B cell (primary cell): ENCODE measurements at regions of chr12 and their contacts with region 1.

Region 1: GRCh38 chr12:25386831-25387731 is 136.4 kb upstream of the KRAS start:
- DNase-seq: peak; percentile 90
- ATAC-seq: peak; percentile 14
- H3K4me3 ChIP-seq: peak overlapping the region; percentile 68 to 97 (median 90)
- H3K4me3 Mint-ChIP-seq: peak overlapping the region; percentile 96
- H3K27ac ChIP-seq: peak overlapping the region; percentile 100
- H3K27ac Mint-ChIP-seq: peak overlapping the region; percentile 100
- H3K4me1 ChIP-seq: peaks cover 6 to 30% of the 10 kb centered on the region in 2 donors
- H3K4me1 Mint-ChIP-seq: peaks cover 41% of the 10 kb centered on the region
- H3K27me3 ChIP-seq: no peaks in the 10 kb centered on the region
- H3K27me3 Mint-ChIP-seq: no peaks in the 10 kb centered on the region
- CTCF ChIP-seq: peak; percentile 93

Region 2: DNA sequence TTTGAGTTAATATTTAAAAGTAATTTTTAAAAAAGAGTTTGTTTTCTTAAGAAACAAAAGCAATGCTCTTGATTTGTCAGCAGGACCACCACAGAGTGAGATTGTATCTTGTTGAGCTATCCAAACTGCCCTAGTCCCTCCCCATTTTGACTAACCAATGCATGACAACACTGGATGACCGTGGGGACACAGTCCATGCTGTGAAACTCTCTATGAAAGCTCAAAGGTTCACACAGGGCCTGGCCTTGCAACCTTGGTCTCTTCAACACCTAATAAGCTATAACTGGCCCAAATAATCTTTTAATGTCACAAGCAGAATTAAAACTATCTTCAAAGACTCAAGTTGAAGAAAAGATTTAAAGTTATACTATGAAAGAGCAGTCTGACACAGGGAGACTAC is 178.5 kb before region 1 on chr12:
- CTCF ChIA-PET with region 1: no interaction called
- POLR2A ChIA-PET with region 1: interaction called, 3 read pairs
- intact Hi-C with region 1: loop called (anchors 1 kb)
- DNase-seq: no peak
- ATAC-seq: no peak
- H3K4me3 ChIP-seq: no peak overlapping the region
- H3K4me3 Mint-ChIP-seq: no peak overlapping the region
- H3K27ac ChIP-seq: no peak overlapping the region
- H3K27ac Mint-ChIP-seq: no peak overlapping the region
- H3K4me1 ChIP-seq: no peaks in the 10 kb centered on the region
- H3K4me1 Mint-ChIP-seq: no peaks in the 10 kb centered on the region
- H3K27me3 ChIP-seq: no peaks in the 10 kb centered on the region
- H3K27me3 Mint-ChIP-seq: no peaks in the 10 kb centered on the region
- CTCF ChIP-seq: no peak

Region 3: DNA sequence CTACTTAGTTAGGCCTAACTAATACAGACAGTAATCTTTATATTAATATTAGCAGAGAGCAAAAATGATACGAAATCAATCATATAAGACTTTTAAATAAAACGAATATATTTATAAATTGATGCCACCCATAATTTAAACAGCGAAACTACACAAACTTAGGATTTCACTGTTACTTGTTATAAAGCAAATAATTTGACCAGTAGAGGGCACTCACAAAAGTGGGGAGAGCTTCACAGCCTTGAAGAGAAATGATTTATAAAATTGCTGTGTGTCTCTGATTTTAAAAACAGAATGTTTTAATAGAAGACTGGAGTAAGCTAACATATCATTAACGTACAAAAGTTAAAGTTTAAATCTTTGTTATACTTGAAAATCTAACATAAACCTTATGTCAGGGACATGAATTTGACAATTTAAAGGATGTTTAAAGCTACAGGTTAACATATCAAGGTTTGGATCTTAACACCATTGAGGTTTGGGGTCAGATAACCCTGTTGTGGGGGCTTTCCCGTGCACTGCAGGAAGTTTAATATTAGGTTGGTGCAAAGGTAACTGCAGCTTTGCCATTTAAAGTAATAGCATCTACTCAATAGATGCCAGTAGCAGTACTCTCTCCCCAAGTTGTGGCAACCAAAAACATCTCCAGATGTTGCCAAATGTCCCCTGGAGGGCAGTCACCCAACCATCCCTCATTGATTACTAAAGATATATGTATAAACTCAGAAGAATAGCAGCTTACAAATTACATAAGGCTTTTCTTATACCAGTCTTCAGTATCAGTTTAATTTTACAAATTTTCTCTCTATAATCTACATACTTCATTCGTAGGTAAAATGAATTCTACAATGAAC is 145.7 kb before region 1 on chr12:
- CTCF ChIA-PET with region 1: interaction called, 4 read pairs
- POLR2A ChIA-PET with region 1: no interaction called
- intact Hi-C with region 1: loop called (anchors 1 kb)
- DNase-seq: peak; percentile 73
- ATAC-seq: peak; percentile 51
- H3K4me3 ChIP-seq: no peak overlapping the region
- H3K4me3 Mint-ChIP-seq: no peak overlapping the region
- H3K27ac ChIP-seq: peak overlapping the region in 1 of 2 donors; percentile 52
- H3K27ac Mint-ChIP-seq: peak overlapping the region; percentile 26
- H3K4me1 ChIP-seq: no peaks in the 10 kb centered on the region
- H3K4me1 Mint-ChIP-seq: peaks cover 9% of the 10 kb centered on the region
- H3K27me3 ChIP-seq: no peaks in the 10 kb centered on the region
- H3K27me3 Mint-ChIP-seq: no peaks in the 10 kb centered on the region
- CTCF ChIP-seq: peak; percentile 89

Region 4: GRCh38 chr12:25250744-25251730 is 136.0 kb before region 1 on chr12 and contains the start of gene KRAS:
- CTCF ChIA-PET with region 1: interaction called, 12 read pairs
- POLR2A ChIA-PET with region 1: interaction called, 17 read pairs
- intact Hi-C with region 1: no loop called
- DNase-seq: peak; percentile 96
- ATAC-seq: peak; percentile 80
- H3K4me3 ChIP-seq: peak within 1 kb of the TSS; percentile 59 to 94 (median 74)
- H3K4me3 Mint-ChIP-seq: peak within 1 kb of the TSS; percentile 96
- H3K27ac ChIP-seq: peak within 1 kb of the TSS; percentile 61 to 89
- H3K27ac Mint-ChIP-seq: peak within 1 kb of the TSS; percentile 99
- H3K4me1 ChIP-seq: peaks cover 25 to 42% of the 10 kb centered on the region in 2 donors
- H3K4me1 Mint-ChIP-seq: peaks cover 48% of the 10 kb centered on the region
- H3K27me3 ChIP-seq: no peaks in the 10 kb centered on the region
- H3K27me3 Mint-ChIP-seq: no peaks in the 10 kb centered on the region
- CTCF ChIP-seq: no peak
- total RNA-seq, gene KRAS: 40.7 and 41.8 TPM in 2 replicates

Region 5: GRCh38 chr12:25347716-25348271 is 39.3 kb before region 1 on chr12:
- CTCF ChIA-PET with region 1: interaction called, 3 read pairs
- POLR2A ChIA-PET with region 1: no interaction called
- intact Hi-C with region 1: loop called (anchors 5 kb)
- DNase-seq: no peak
- ATAC-seq: no peak
- H3K4me3 ChIP-seq: no peak overlapping the region
- H3K4me3 Mint-ChIP-seq: no peak overlapping the region
- H3K27ac ChIP-seq: no peak overlapping the region
- H3K27ac Mint-ChIP-seq: no peak overlapping the region
- H3K4me1 ChIP-seq: no peaks in the 10 kb centered on the region
- H3K4me1 Mint-ChIP-seq: peaks cover 4% of the 10 kb centered on the region
- H3K27me3 ChIP-seq: peaks cover 0 to 6% (median 1%) of the 10 kb centered on the region in 4 experiments
- H3K27me3 Mint-ChIP-seq: no peaks in the 10 kb centered on the region
- CTCF ChIP-seq: no peak